HepG2 (cell line): ENCODE measurements at regions of chr12 and their contacts with region 1.

Region 1: GRCh38 chr12:131830335-131830913 is 2.2 kb downstream of the MMP17 start:
- DNase-seq: peak; percentile 43
- ATAC-seq: peak; percentile 79
- H3K4me3 ChIP-seq: peak overlapping the region; percentile 54 to 73 (median 58); a peak in 5 of 6 replicates
- H3K27ac ChIP-seq: no peak overlapping the region
- H3K4me1 ChIP-seq: peaks cover 59% of the 10 kb centered on the region
- H3K27me3 ChIP-seq: peaks cover 6 to 50% of the 10 kb centered on the region in 2 experiments; a peak in 4 of 5 replicates
- CTCF ChIP-seq: peak; percentile 87
- EP300 ChIP-seq: no peak
- POLR2A ChIP-seq: no peak
- RAD21 ChIP-seq: peak; percentile 89

Region 2: DNA sequence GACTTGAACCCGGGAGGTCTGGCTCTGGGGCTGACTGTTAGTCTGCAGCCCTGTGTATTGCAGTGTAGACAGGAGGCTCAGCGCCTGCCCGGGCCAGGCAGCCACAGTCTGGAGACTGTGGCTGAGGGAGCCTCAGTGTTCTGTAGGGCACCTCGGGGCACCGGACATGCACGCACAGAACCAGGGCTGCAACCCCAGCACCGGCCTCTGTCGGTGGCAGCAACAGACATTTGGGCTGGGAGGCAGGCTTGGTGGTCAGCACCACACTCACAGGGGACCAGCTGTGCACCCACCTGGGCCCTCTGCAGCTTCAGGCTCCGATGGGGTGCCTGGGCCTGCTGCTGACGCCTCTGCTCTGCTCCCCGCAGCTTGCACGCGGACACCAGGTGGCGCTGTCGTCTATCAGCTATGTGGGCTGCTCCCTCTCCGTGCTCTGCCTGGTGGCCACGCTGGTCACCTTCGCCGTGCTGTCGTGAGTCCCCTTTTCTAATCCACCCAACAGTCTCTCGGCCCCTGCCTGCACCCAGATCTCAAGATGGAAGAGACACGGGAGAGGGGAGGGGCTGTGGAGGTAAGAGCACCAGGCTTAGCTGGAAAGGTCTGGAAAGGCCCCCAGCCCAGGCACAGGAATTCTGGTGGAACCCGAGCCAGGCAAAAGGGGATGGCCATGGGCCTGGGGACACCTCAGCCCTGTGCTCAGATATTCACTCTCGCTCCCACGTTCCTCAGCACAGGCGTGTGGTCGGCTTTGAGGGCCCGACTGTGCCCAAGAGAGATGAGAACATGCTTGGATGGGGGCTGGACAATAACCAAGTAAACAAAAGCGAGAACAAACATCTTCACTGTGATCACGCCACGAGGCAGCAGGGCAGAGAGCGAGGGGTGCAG is 725.7 kb before region 1 on chr12:
- CTCF ChIA-PET with region 1: no interaction called
- POLR2A ChIA-PET with region 1: no interaction called
- in situ Hi-C with region 1: loop called (anchors 25 kb)
- intact Hi-C with region 1: loop called (anchors 10 kb)
- DNase-seq: peak; percentile 50
- ATAC-seq: peak; percentile 99
- H3K4me3 ChIP-seq: peak overlapping the region in 1 of 3 experiments; percentile 11; a peak in 1 of 6 replicates
- H3K27ac ChIP-seq: no peak overlapping the region
- H3K4me1 ChIP-seq: peaks cover 6% of the 10 kb centered on the region; the same call in 1 of the 2 replicates
- H3K27me3 ChIP-seq: peaks cover 0 to 1% of the 10 kb centered on the region in 2 experiments; a peak in 1 of 5 replicates
- CTCF ChIP-seq: peak; percentile 98
- EP300 ChIP-seq: no peak
- POLR2A ChIP-seq: no peak
- RAD21 ChIP-seq: peak; percentile 92

Region 3: GRCh38 chr12:131608740-131609690 is 221.4 kb before region 1 on chr12:
- CTCF ChIA-PET with region 1: no interaction called
- POLR2A ChIA-PET with region 1: no interaction called
- in situ Hi-C with region 1: loop called (anchors 10 kb)
- intact Hi-C with region 1: loop called (anchors 10 kb)
- DNase-seq: peak; percentile 21
- ATAC-seq: peak; percentile 89
- H3K4me3 ChIP-seq: no peak overlapping the region
- H3K27ac ChIP-seq: no peak overlapping the region
- H3K4me1 ChIP-seq: no peaks in the 10 kb centered on the region
- H3K27me3 ChIP-seq: peaks cover 14 to 88% of the 10 kb centered on the region in 2 experiments; a peak in 4 of 5 replicates
- CTCF ChIP-seq: peak; percentile 76
- EP300 ChIP-seq: no peak
- POLR2A ChIP-seq: no peak
- RAD21 ChIP-seq: no peak

Region 4: DNA sequence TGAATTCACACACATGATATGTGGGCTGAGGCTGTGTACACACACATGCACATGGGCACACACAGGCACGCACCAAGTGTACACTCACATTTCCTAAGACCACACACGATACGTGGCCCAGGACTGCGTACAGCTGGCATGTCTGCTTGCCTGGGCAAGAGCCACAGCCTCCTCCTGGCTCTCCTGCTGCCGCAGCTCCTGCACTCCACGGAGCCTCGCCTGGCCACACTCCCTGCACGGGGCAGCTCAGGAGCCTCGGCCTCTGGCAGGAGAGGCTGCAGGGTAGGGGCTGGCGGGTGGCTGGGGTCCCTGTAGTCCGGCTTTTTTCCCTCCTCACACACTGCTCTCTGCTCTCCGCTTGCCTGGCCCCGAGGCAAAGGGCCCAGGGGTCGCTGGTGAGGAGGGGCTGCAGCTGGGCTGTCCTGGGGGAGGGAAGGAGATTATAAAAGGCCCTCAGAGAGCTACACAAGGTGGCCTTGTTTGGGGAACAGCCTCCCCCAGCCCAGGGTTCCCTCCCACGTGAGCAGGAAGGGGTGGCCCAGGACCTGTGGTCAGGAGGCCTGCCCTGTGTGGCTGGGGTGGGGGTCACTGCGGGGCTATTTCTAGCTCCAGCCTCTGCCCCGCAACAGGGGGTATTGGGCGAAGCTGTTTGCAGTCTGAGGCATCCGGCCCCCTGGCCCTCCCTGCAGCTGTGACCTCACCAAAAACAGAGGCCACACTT is 208.6 kb before region 1 on chr12:
- CTCF ChIA-PET with region 1: no interaction called
- POLR2A ChIA-PET with region 1: no interaction called
- in situ Hi-C with region 1: loop called (anchors 10 kb)
- intact Hi-C with region 1: no loop called
- DNase-seq: no peak
- ATAC-seq: peak; percentile 35
- H3K4me3 ChIP-seq: no peak overlapping the region
- H3K27ac ChIP-seq: no peak overlapping the region
- H3K4me1 ChIP-seq: no peaks in the 10 kb centered on the region
- H3K27me3 ChIP-seq: peaks cover 19 to 69% of the 10 kb centered on the region in 2 experiments
- CTCF ChIP-seq: no peak
- EP300 ChIP-seq: no peak
- POLR2A ChIP-seq: no peak
- RAD21 ChIP-seq: no peak

Region 5: DNA sequence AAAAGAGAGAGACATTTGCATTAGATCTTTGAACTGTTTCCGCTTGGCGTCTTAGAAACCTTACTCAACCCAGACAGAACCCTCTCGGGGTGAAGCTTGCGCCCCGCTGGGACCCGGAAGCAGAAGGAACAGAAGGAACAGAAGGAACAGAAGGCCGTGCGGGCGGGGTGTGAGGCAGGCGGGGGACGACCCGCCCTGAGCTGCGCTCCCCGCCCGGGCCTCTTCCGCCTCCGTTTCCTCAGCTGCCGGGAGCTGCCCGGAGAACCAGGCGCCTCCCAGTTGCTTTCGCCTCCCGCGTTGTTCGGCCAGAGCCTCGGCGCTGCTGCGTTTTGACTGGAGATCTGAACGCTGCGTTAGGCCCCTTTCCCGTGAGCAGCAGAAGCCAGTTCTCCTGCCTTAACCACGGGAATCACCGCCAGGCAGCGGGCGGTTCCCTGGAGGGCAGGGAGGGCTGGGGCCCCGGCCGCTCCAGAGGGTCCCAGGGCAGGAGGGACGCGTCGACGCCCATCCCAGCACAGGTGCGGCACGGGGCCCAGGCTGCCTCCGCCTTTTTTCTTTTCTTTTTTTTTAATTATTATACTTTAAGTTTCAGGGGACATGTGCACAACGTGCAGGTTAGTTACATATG is 21.6 kb before region 1 on chr12:
- CTCF ChIA-PET with region 1: no interaction called
- POLR2A ChIA-PET with region 1: no interaction called
- in situ Hi-C with region 1: no loop called
- intact Hi-C with region 1: no loop called
- DNase-seq: no peak
- ATAC-seq: no peak
- H3K4me3 ChIP-seq: no peak overlapping the region
- H3K27ac ChIP-seq: no peak overlapping the region
- H3K4me1 ChIP-seq: no peaks in the 10 kb centered on the region
- H3K27me3 ChIP-seq: no peaks in the 10 kb centered on the region; a peak in 2 of 5 replicates
- CTCF ChIP-seq: no peak
- EP300 ChIP-seq: no peak
- POLR2A ChIP-seq: no peak
- RAD21 ChIP-seq: no peak

Region 6: GRCh38 chr12:131894313-131894860 is 64.0 kb after region 1 on chr12 and contains the start of gene ULK1:
- CTCF ChIA-PET with region 1: no interaction called
- POLR2A ChIA-PET with region 1: interaction called, 3 read pairs
- in situ Hi-C with region 1: no loop called
- intact Hi-C with region 1: loop called (anchors 10 kb)
- DNase-seq: peak; percentile 70
- ATAC-seq: peak; percentile 43
- H3K4me3 ChIP-seq: peak within 1 kb of the TSS; percentile 66 to 82 (median 72)
- H3K27ac ChIP-seq: peak within 1 kb of the TSS; percentile 79
- H3K4me1 ChIP-seq: peaks cover 24% of the 10 kb centered on the region
- H3K27me3 ChIP-seq: peaks cover 2 to 3% of the 10 kb centered on the region in 2 experiments; a peak in 4 of 5 replicates
- CTCF ChIP-seq: no peak
- EP300 ChIP-seq: no peak
- POLR2A ChIP-seq: peak; percentile 67 to 69
- RAD21 ChIP-seq: peak; percentile 46; the same call in 1 of the 2 replicates
- total RNA-seq, gene ULK1: 1.7 and 2.8 TPM in 2 replicates

Region 7: DNA sequence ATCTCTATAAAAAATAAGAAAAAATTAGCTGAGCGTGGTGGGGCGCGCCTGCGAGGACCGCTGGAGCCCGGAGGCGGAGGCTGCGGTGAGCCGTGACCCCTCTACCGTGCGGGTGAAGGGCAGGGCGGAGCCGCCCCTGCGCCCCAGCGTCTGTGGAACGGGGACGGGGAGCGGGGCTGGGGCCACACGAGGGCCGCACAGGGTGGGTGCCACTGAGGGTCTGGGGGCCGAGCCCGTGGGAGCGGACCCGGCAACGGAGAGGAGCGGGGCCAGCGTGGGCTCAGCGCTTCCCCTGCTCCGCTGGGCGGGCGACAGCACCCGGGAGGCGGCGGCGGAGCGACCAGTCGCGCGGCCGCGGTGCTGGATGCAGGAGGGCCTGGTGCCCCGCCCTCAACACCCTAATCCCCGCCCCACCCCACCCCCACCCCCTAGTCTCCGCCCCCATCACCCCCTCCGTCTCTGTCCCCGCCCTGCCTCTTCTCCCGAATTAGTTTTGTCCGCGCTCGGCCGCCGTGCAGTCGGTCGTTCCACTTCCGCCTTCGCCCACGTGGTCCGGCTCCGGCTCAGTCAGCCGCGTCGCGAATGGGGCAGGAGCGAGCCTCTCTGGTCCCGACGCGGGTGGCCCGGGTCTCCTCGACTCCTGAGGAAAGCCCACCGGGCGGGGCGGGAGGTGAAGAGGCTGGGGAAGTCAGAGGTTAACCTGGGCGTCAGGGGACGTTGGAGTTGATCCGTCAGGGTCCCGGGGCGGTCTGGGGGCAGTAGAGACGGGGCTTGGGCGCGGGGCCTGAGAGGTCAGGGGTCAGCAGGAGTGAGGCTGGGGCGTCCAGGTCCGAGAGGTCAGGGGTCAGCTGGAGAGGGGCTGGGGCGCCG is 98.5 kb after region 1 on chr12 and contains the start of gene PUS1:
- CTCF ChIA-PET with region 1: no interaction called
- POLR2A ChIA-PET with region 1: no interaction called
- in situ Hi-C with region 1: no loop called
- intact Hi-C with region 1: loop called (anchors 10 kb)
- DNase-seq: peak; percentile 88
- ATAC-seq: peak; percentile 81
- H3K4me3 ChIP-seq: peak within 1 kb of the TSS; percentile 78 to 92 (median 90)
- H3K27ac ChIP-seq: peak within 1 kb of the TSS; percentile 87
- H3K4me1 ChIP-seq: peaks cover 18% of the 10 kb centered on the region
- H3K27me3 ChIP-seq: no peaks in the 10 kb centered on the region
- CTCF ChIP-seq: no peak
- EP300 ChIP-seq: no peak
- POLR2A ChIP-seq: peak; percentile 65 to 93
- RAD21 ChIP-seq: no peak
- total RNA-seq, gene PUS1: 23.5 and 24.7 TPM in 2 replicates